Body of pancreas (tissue), 4 donors: ENCODE measurements at regions of chr20 and their contacts with region 1.

Region 1: GRCh38 chr20:9981829-9982228 is 53.0 kb upstream of the ANKEF1 start:
- DNase-seq: no peak
- ATAC-seq: no peak
- H3K4me3 ChIP-seq: no peak overlapping the region
- H3K27ac ChIP-seq: no peak overlapping the region
- H3K4me1 ChIP-seq: peaks cover 5% of the 10 kb centered on the region
- H3K27me3 ChIP-seq: no peaks in the 10 kb centered on the region
- CTCF ChIP-seq: no peak
- POLR2A ChIP-seq: no peak

Region 2: DNA sequence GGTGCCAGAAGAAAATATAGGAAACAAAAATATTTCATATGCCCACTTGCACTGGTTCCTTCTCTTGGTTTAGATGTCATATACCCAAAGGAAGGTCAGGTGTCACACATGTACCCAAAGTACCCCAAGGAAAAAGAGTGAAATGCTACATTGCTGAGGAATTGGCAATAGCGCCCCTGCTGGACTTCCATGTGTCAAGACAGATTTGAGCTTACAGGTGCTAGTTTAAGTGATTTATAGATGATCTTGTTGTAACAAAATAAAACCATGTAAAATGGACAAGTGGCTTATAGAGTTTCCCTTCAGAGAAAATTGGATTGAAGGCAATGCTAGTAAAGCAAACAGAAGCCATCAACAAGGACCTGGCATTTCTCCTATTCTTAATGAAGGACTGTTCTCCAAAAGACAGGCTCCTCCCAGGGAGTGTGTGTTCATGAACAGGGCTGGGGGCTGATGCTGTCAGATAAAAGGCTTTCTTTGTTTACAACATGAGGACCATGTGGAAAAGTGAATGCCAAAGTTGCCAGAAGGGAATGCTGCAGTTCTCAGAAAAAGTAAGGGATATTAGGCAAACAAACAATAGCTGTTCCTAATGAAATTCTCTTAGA is 78.7 kb before region 1 on chr20:
- intact Hi-C with region 1: no loop called
- DNase-seq: peak in 2 of 4 donors; percentile 3 to 31
- ATAC-seq: no peak
- H3K4me3 ChIP-seq: no peak overlapping the region
- H3K27ac ChIP-seq: no peak overlapping the region
- H3K4me1 ChIP-seq: no peaks in the 10 kb centered on the region
- H3K27me3 ChIP-seq: no peaks in the 10 kb centered on the region
- CTCF ChIP-seq: peak in 4 of 7 experiments; percentile 14 to 21 (median 18)
- POLR2A ChIP-seq: no peak

Region 3: GRCh38 chr20:10034717-10035571 is 53.1 kb after region 1 on chr20 and contains the start of gene ANKEF1:
- intact Hi-C with region 1: no loop called
- DNase-seq: peak; percentile 92 to 95 (median 93)
- ATAC-seq: peak; percentile 97
- H3K4me3 ChIP-seq: peak within 1 kb of the TSS; percentile 34 to 43
- H3K27ac ChIP-seq: peak within 1 kb of the TSS; percentile 70 to 94 (median 87)
- H3K4me1 ChIP-seq: peaks cover 53% of the 10 kb centered on the region
- H3K27me3 ChIP-seq: no peaks in the 10 kb centered on the region
- CTCF ChIP-seq: peak in 2 of 7 experiments; percentile 11 to 28
- POLR2A ChIP-seq: peak; percentile 52 to 88 (median 85)
- total RNA-seq, gene ANKEF1: 5.9 to 6.2 TPM

Region 4: GRCh38 chr20:10090588-10091166 is 108.8 kb after region 1 on chr20:
- intact Hi-C with region 1: loop called (anchors 5 kb)
- DNase-seq: peak; percentile 78 to 90 (median 86)
- ATAC-seq: peak; percentile 99
- H3K4me3 ChIP-seq: no peak overlapping the region
- H3K27ac ChIP-seq: peak overlapping the region; percentile 2 to 62 (median 24)
- H3K4me1 ChIP-seq: peaks cover 19% of the 10 kb centered on the region
- H3K27me3 ChIP-seq: no peaks in the 10 kb centered on the region
- CTCF ChIP-seq: peak; percentile 73 to 90 (median 85)
- POLR2A ChIP-seq: no peak

Region 5: DNA sequence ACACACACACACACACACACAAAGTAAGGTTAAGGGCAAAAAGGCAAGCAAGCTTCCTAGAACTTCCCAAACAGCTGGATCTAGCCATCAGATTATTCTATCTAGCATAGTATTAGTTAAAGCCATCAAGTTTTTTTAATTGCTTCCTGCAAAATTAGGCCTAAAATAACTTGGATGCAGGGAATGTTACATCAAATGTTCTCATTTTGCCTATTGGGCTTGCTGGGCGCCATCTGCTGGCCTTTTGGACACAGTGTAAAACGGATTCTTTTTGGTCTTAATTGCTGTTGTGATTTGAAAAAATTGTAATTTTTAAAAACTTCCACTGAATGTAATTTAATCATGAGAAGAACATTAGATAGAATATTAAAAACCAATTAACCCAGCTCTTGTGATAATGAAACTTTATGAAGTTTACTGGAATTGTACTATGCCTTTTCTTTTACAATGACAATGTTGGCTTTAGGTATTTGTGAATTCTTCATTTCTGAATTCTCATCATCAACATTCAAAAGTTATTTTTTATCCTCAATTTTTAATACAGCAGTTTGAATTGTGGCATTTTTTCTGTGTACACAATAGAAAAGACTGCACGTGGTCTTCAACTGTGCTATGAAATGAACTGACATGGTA is 445.3 kb after region 1 on chr20:
- intact Hi-C with region 1: loop called (anchors 5 kb)
- DNase-seq: peak; percentile 56 to 71 (median 64)
- ATAC-seq: peak; percentile 60
- H3K4me3 ChIP-seq: no peak overlapping the region
- H3K27ac ChIP-seq: no peak overlapping the region
- H3K4me1 ChIP-seq: peaks cover 33% of the 10 kb centered on the region
- H3K27me3 ChIP-seq: no peaks in the 10 kb centered on the region
- CTCF ChIP-seq: peak; percentile 46 to 82 (median 74)
- POLR2A ChIP-seq: no peak